Esophagus muscularis mucosa (tissue), 4 donors: ENCODE measurements at regions of chr20 and their contacts with region 1.

Region 1: GRCh38 chr20:3679749-3680700 is 1.8 kb downstream of the ADAM33 start:
- DNase-seq: no peak
- H3K4me3 ChIP-seq: peak overlapping the region; percentile 66 to 75 (median 66)
- H3K27ac ChIP-seq: peak overlapping the region; percentile 88 to 91 (median 90)
- H3K4me1 ChIP-seq: peaks cover 28 to 70% (median 68%) of the 10 kb centered on the region in 4 donors
- H3K27me3 ChIP-seq: peaks cover 0 to 12% (median 0%) of the 10 kb centered on the region in 4 donors
- CTCF ChIP-seq: no peak
- EP300 ChIP-seq: no peak
- POLR2A ChIP-seq: no peak

Region 2: GRCh38 chr20:3710703-3711483 is 30.9 kb after region 1 on chr20:
- intact Hi-C with region 1: loop called (anchors 1 kb)
- DNase-seq: peak; percentile 95
- H3K4me3 ChIP-seq: peak overlapping the region in 3 of 4 donors; percentile 19 to 41 (median 26)
- H3K27ac ChIP-seq: peak overlapping the region in 2 of 4 donors; percentile 1 to 18
- H3K4me1 ChIP-seq: peaks cover 11 to 15% (median 13%) of the 10 kb centered on the region in 4 donors
- H3K27me3 ChIP-seq: no peaks in the 10 kb centered on the region
- CTCF ChIP-seq: peak in 2 of 3 experiments; percentile 97 to 99
- EP300 ChIP-seq: no peak
- POLR2A ChIP-seq: no peak

Region 3: GRCh38 chr20:3771552-3772058 is 91.6 kb after region 1 on chr20:
- intact Hi-C with region 1: loop called (anchors 5 kb)
- DNase-seq: no peak
- H3K4me3 ChIP-seq: no peak overlapping the region
- H3K27ac ChIP-seq: no peak overlapping the region
- H3K4me1 ChIP-seq: peaks cover 22 to 29% (median 25%) of the 10 kb centered on the region in 4 donors
- H3K27me3 ChIP-seq: no peaks in the 10 kb centered on the region
- CTCF ChIP-seq: no peak
- EP300 ChIP-seq: no peak
- POLR2A ChIP-seq: no peak

Region 4: GRCh38 chr20:3797592-3798372 is 117.8 kb after region 1 on chr20:
- intact Hi-C with region 1: no loop called
- DNase-seq: no peak
- H3K4me3 ChIP-seq: peak overlapping the region; percentile 63 to 81 (median 66)
- H3K27ac ChIP-seq: peak overlapping the region; percentile 95 to 99 (median 98)
- H3K4me1 ChIP-seq: peaks cover 15 to 58% (median 57%) of the 10 kb centered on the region in 4 donors
- H3K27me3 ChIP-seq: no peaks in the 10 kb centered on the region
- CTCF ChIP-seq: no peak
- EP300 ChIP-seq: no peak
- POLR2A ChIP-seq: no peak

Region 5: GRCh38 chr20:4064144-4064909 is 384.3 kb after region 1 on chr20:
- intact Hi-C with region 1: no loop called
- DNase-seq: peak; percentile 96
- H3K4me3 ChIP-seq: no peak overlapping the region
- H3K27ac ChIP-seq: peak overlapping the region; percentile 76 to 79 (median 78)
- H3K4me1 ChIP-seq: peaks cover 38 to 48% (median 41%) of the 10 kb centered on the region in 4 donors
- H3K27me3 ChIP-seq: no peaks in the 10 kb centered on the region
- CTCF ChIP-seq: no peak
- EP300 ChIP-seq: no peak
- POLR2A ChIP-seq: no peak